ENCODE measurements at regions of chr16 and their contacts with region 1.

Region 1: GRCh38 chr16:4766874-4767628 is at the start of gene ZNF500:
- DNase-seq: peak; percentile 97 to 99
- H3K4me3 ChIP-seq: peak within 1 kb of the TSS; percentile 71 to 88
- H3K27ac ChIP-seq: peak within 1 kb of the TSS; percentile 91 to 92
- H3K4me1 ChIP-seq: peaks cover 0 to 15% of the 10 kb centered on the region in 2 donors
- H3K27me3 ChIP-seq: no peaks in the 10 kb centered on the region
- CTCF ChIP-seq: peak in 2 of 4 experiments; percentile 9 to 11
- POLR2A ChIP-seq: peak; percentile 58 to 66
- total RNA-seq, gene ZNF500: 11.0 to 31.2 (median 20.2) TPM

Region 2: DNA sequence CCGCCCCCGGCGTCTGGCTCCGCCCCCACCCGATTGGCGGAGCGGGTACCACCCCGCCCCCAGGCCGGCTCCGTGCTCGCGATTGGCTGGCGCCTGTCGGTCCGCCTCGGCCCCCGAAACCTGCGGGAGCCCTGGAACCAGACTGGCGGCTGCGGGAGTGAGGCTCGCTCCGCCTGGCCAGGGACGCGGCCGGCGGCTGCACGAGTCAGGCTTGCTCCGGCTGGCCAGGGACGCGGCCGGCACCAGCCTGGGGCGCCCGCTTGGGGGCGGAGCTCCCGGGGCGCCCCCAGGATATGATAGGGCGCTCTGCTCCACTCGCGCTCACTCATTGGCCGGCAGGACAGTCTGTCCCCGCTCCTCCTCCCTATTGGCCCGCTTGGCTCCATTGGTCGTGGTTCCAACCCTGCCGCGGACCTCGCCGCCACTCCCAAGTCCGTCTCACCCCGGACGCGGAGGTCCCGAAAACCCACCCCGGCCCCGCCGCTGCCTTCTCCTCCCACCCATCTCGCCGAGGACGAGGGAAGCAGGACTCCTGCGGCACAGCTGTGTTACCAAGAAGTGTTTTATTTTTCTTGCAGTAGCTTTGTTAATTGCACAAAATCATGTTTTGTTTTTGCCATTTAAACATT is 35.7 kb after region 1 on chr16:
- intact Hi-C with region 1: loop called (anchors 5 kb)
- DNase-seq: peak; percentile 91
- H3K4me3 ChIP-seq: peak overlapping the region; percentile 51 to 83
- H3K27ac ChIP-seq: peak overlapping the region; percentile 70 to 85
- H3K4me1 ChIP-seq: peaks cover 0 to 11% of the 10 kb centered on the region in 2 donors
- H3K27me3 ChIP-seq: no peaks in the 10 kb centered on the region
- CTCF ChIP-seq: peak; percentile 7 to 66 (median 24)
- POLR2A ChIP-seq: peak; percentile 12 to 41

Region 3: GRCh38 chr16:4846891-4847773 is 80.1 kb after region 1 on chr16 and contains the starts of genes GLYR1 and UBN1:
- intact Hi-C with region 1: no loop called
- DNase-seq: peak; percentile 98 to 99
- H3K4me3 ChIP-seq: peak within 1 kb of the TSS; percentile 88 to 98
- H3K27ac ChIP-seq: peak within 1 kb of the TSS; percentile 91
- H3K4me1 ChIP-seq: peaks cover 0 to 9% of the 10 kb centered on the region in 2 donors
- H3K27me3 ChIP-seq: no peaks in the 10 kb centered on the region
- CTCF ChIP-seq: peak in 2 of 4 experiments; percentile 8 to 22
- POLR2A ChIP-seq: peak; percentile 87 to 88
- total RNA-seq, gene GLYR1: 26.6 to 86.3 (median 47.1) TPM
- total RNA-seq, gene UBN1: 4.9 to 56.2 (median 33.4) TPM

Measured in uterus (tissue), 4 donors.